ENCODE measurements at regions of chr21 and their contacts with region 1.

Region 1: DNA sequence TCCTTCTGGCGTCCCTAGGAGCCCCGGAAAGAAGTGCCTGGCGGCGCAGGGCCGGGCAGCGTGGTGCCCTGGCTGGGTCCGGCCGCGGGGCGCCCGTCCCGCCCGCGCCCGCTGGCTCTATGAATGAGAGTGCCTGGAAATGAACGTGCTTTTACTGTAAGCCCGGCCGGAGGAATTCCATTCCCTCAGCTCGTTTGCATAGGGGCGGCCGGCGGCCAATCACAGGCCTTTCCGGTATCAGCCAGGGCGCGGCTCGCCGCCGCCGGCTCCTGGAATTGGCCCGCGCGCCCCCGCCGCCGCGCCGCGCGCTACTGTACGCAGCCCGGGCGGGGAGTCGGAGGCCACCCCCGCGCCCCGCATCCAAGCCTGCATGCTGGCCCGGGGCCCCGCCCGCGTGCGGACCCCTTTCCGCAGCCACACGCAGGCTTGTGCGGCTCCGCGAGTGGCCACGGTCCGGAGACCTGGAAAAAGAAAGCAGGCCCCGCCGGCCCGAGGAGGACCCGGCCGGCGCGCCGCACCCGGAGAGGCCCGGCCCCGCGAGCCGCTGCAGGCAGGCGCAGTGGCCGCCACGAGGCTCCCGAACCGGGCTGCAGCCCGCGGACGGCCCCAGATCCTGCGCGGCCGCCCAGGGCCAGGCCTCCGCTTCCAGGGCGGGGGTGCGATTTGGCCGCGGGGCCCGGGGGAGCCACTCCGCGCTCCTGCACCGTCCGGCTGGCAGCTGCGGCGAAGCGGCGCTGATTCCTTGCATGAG is 160.4 kb downstream of the RUNX1 start:
- DNase-seq: peak; percentile 33 to 88 (median 70)
- ATAC-seq: peak; percentile 28
- H3K4me3 ChIP-seq: peak overlapping the region; percentile 72 to 77
- H3K4me3 Mint-ChIP-seq: peak overlapping the region; percentile 90
- H3K27ac ChIP-seq: peak overlapping the region; percentile 58 to 78
- H3K27ac Mint-ChIP-seq: peak overlapping the region; percentile 94
- H3K4me1 ChIP-seq: peaks cover 34% of the 10 kb centered on the region
- H3K4me1 Mint-ChIP-seq: peaks cover 51% of the 10 kb centered on the region
- H3K27me3 ChIP-seq: no peaks in the 10 kb centered on the region
- H3K27me3 Mint-ChIP-seq: no peaks in the 10 kb centered on the region
- CTCF ChIP-seq: no peak

Region 2: DNA sequence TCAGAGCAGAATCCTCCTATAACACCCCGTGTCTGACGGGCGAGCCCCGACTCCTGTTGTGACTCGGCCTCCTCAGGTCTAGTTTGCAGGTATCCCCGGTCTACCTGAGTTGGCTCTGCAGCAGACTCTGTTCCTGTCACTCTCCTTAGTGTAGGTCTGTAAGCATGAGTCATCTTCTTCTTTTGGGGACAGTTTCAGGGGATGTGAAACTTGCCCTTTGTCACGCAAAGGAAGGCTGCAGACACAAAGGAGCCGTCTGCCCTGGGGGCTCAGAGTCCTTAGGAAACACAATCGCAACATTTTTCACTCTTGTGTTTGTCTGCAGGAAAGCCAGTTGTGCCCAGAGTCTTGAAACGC is 22.8 kb before region 1 on chr21:
- CTCF ChIA-PET with region 1: no interaction called
- POLR2A ChIA-PET with region 1: no interaction called
- intact Hi-C with region 1: loop called in 1 of 2 experiments (anchors 2 kb)
- DNase-seq: peak in 2 of 9 experiments; percentile 8 to 29
- ATAC-seq: no peak
- H3K4me3 ChIP-seq: no peak overlapping the region
- H3K4me3 Mint-ChIP-seq: no peak overlapping the region
- H3K27ac ChIP-seq: no peak overlapping the region
- H3K27ac Mint-ChIP-seq: no peak overlapping the region
- H3K4me1 ChIP-seq: peaks cover 6% of the 10 kb centered on the region
- H3K4me1 Mint-ChIP-seq: peaks cover 25% of the 10 kb centered on the region
- H3K27me3 ChIP-seq: no peaks in the 10 kb centered on the region
- H3K27me3 Mint-ChIP-seq: no peaks in the 10 kb centered on the region
- CTCF ChIP-seq: no peak

Region 3: DNA sequence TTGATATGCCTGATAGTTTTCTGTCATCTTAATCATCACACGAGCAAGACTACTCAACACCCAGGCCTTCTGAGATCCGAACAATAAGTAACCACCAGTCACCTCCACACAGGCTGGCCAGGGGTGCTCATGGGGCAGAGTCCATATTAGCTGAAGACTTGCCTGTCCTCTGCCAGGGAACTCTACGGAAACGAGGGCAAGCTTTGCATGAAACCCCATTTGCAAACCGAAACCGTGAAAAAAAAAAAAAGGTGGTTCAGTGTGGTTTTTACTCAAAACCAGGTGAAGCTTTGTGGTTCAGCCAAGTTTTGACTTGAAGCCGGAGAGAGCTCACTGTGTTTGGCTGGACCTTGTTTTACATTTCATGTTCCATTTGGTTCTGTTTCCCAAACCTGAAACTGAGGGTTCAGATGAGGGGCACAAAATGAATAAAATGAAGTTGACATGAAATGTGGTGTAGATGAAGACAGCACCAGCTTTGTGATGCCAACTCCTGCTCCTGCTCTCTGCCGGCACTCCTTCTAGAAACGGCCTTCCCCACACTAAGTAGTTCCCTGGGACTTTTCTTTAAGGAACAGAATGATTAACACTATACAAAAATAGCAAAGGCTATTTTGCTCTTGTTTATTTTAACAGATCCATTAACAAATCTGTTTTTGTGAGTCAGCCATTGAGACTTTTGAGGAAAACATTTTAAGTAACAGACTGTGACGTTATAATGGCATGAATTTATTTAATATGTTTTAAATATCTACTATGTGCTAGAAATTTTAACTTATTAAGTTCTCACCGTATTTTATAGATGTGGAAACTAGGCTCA is 85.6 kb after region 1 on chr21:
- CTCF ChIA-PET with region 1: interaction called, 11 read pairs
- POLR2A ChIA-PET with region 1: interaction called, 3 read pairs
- intact Hi-C with region 1: no loop called
- DNase-seq: peak in 8 of 9 experiments; percentile 30 to 86 (median 54)
- ATAC-seq: peak; percentile 84
- H3K4me3 ChIP-seq: peak overlapping the region; percentile 19 to 22
- H3K4me3 Mint-ChIP-seq: peak overlapping the region; percentile 78
- H3K27ac ChIP-seq: peak overlapping the region; percentile 8 to 36
- H3K27ac Mint-ChIP-seq: peak overlapping the region; percentile 89
- H3K4me1 ChIP-seq: peaks cover 59% of the 10 kb centered on the region
- H3K4me1 Mint-ChIP-seq: peaks cover 85% of the 10 kb centered on the region
- H3K27me3 ChIP-seq: no peaks in the 10 kb centered on the region
- H3K27me3 Mint-ChIP-seq: no peaks in the 10 kb centered on the region
- CTCF ChIP-seq: no peak

Region 4: DNA sequence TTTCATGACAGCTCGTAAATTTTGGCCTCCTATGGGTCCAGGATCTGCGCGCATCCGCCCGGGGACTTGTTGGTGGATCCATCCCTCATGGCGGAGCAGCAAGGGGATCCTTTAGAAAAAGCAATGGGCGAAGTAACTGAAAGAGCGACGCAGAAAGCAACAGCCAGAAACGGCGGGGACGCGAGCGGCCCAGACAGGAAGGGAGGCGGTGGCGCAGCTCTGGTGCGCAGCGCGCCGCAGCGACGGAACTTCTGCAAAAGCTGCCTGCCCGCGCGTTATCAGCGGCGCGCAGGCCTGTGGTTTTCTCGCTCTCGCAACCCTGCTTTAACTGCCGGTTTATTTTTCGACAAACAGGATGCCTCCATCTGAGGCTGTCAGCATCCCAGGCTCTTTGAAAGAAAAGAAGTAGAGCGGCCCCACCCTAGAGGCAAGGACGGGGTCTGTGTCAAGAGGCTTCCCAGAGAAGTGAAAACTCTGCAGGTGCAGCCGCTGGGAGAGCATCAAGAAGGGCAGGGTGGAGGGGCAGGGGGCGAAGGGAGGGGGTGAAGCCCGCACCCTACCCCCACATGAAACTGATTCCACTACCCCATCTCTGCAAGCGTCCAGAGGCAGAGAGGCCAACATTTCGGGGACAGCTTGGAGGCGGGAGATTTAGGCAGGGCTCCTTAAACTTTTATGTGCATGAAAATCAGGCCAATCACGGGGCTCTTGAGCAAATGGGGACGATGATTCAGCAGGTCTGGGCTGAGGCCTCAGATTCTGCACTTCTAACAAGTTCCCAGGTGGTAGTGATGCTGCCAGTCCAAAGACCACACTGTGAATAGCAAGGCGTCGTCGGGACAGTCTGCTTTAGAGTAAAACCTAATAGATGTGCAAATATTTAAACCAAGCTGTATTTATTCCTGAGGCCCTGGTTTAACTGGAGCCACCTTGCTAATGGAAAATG is 138.1 kb after region 1 on chr21:
- CTCF ChIA-PET with region 1: interaction called, 11 read pairs
- POLR2A ChIA-PET with region 1: interaction called, 18 read pairs
- intact Hi-C with region 1: loop called (anchors 1 kb)
- DNase-seq: peak; percentile 75 to 96 (median 88)
- ATAC-seq: peak; percentile 83
- H3K4me3 ChIP-seq: peak overlapping the region; percentile 32 to 39
- H3K4me3 Mint-ChIP-seq: peak overlapping the region; percentile 77
- H3K27ac ChIP-seq: peak overlapping the region; percentile 74 to 77
- H3K27ac Mint-ChIP-seq: peak overlapping the region; percentile 97
- H3K4me1 ChIP-seq: peaks cover 80% of the 10 kb centered on the region
- H3K4me1 Mint-ChIP-seq: peaks cover 89% of the 10 kb centered on the region
- H3K27me3 ChIP-seq: no peaks in the 10 kb centered on the region
- H3K27me3 Mint-ChIP-seq: no peaks in the 10 kb centered on the region
- CTCF ChIP-seq: no peak

Region 5: DNA sequence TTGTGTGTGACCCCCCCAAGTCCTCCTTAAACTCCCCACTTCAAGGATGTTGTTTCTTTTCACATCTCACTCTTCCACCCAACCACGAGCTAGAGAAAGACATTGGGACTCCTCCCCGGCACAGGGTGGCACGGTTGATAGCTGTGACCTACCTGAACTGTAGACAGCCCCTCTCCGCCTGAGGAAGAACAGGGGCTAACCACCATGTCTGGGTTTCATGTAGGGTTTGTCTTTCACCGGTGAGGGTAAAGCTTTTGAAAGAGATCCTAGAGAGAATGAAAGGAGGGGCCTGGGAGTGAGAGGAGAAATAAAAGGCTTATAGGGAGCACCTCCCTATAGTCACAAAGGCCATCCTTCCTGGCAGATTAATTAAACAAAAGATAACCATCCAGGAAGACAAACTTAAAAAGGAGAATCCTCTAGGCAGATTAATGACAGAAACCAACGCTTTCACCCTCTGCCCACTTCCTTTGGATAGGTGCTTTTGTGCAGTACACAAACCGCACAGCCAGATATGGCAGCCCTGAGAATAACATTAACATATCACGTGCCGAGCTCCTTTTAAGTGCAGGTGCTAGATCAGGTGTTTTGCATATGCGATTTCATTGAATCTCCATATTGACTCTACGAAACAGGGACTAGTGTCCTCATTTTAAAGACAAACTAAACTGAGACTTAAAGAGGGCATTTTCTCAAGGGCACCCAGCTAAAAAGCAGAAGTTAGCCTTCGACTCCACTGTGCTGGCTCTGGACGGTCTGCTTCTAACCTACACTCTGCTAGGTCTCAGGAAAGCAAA is 338.4 kb after region 1 on chr21:
- CTCF ChIA-PET with region 1: no interaction called
- POLR2A ChIA-PET with region 1: interaction called, 3 read pairs
- intact Hi-C with region 1: loop called (anchors 2 to 5 kb)
- DNase-seq: peak; percentile 18 to 84 (median 41)
- ATAC-seq: peak; percentile 87
- H3K4me3 ChIP-seq: peak overlapping the region; percentile 2 to 16
- H3K4me3 Mint-ChIP-seq: peak overlapping the region; percentile 67
- H3K27ac ChIP-seq: peak overlapping the region; percentile 48 to 71
- H3K27ac Mint-ChIP-seq: peak overlapping the region; percentile 95
- H3K4me1 ChIP-seq: peaks cover 38% of the 10 kb centered on the region
- H3K4me1 Mint-ChIP-seq: peaks cover 41% of the 10 kb centered on the region
- H3K27me3 ChIP-seq: no peaks in the 10 kb centered on the region
- H3K27me3 Mint-ChIP-seq: no peaks in the 10 kb centered on the region
- CTCF ChIP-seq: no peak